Heart left ventricle (tissue), 16 donors: ENCODE measurements at regions of chr5 and their contacts with region 1.

Region 1: GRCh38 chr5:6311568-6312501 is 66.5 kb downstream of the MED10 start:
- DNase-seq: peak in 4 of 5 donors; percentile 57 to 78 (median 64)
- ATAC-seq: peak; percentile 97 to 100 (median 98)
- H3K4me3 ChIP-seq: no peak overlapping the region
- H3K27ac ChIP-seq: peak overlapping the region in 8 of 12 donors; percentile 18 to 86 (median 72)
- H3K4me1 ChIP-seq: peaks cover 0 to 17% (median 1%) of the 10 kb centered on the region in 12 donors
- H3K27me3 ChIP-seq: no peaks in the 10 kb centered on the region
- CTCF ChIP-seq: no peak
- POLR2A ChIP-seq: no peak

Region 2: GRCh38 chr5:6236858-6237481 is 74.9 kb before region 1 on chr5:
- intact Hi-C with region 1: no loop called
- DNase-seq: no peak
- ATAC-seq: no peak
- H3K4me3 ChIP-seq: no peak overlapping the region
- H3K27ac ChIP-seq: no peak overlapping the region
- H3K4me1 ChIP-seq: no peaks in the 10 kb centered on the region
- H3K27me3 ChIP-seq: no peaks in the 10 kb centered on the region
- CTCF ChIP-seq: no peak
- POLR2A ChIP-seq: no peak

Region 3: GRCh38 chr5:6435356-6435755 is 123.5 kb after region 1 on chr5:
- intact Hi-C with region 1: loop called in 5 of 10 experiments (anchors 10 kb)
- DNase-seq: no peak
- ATAC-seq: no peak
- H3K4me3 ChIP-seq: no peak overlapping the region
- H3K27ac ChIP-seq: no peak overlapping the region
- H3K4me1 ChIP-seq: peaks cover 0 to 23% (median 7%) of the 10 kb centered on the region in 12 donors
- H3K27me3 ChIP-seq: no peaks in the 10 kb centered on the region
- CTCF ChIP-seq: peak in 11 of 12 donors; percentile 5 to 44 (median 23)
- POLR2A ChIP-seq: no peak